ENCODE measurements at regions of chr5 and their contacts with region 1.

Region 1: DNA sequence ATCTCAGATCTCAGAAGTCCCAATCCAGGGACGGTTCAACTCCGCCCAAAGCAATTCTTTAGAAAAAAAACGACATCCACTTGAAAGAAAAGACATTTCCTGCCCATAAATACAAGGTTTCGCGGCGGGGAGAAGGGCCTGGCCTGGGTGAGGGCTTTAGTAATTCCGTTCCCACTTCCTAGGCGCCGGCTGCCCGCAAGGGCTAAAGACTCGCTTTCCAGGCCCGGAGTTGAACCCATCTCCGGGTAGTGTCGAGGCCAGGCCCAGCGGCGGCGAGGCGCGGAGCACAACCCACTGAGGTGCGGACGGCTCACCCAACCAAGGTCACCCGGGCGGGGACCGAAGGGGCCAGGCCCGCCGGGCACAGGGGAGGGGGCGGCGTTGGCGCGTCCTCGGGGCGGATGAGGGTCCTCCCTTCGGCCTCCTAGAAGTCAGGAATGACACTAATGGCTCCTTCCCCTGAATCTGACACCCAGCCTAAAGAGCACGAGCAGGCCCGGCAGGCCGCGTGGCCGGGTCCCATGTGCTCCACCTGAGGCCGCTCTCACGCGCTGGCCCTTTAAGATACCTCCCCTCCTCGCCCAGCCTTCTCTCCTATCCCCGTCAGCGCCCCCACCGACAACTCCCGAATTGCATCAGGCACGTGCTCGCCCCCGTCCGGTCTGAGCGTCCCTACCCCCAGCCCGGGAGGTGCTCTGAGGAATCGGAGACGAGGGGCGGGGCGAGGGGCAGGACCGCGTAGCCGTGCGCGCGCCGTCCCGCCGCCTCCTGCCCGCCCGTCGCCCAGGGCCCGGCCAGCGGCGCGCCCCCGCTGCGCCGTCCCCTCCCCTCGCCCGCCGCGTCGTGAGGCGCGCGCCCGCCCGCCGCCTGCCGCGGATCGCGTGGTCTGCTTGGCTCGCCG is 467 bp upstream of the LARP1 start:
- DNase-seq: peak; percentile 98
- ATAC-seq: peak; percentile 86
- H3K4me3 ChIP-seq: peak overlapping the region; percentile 98
- H3K27ac ChIP-seq: peak overlapping the region; percentile 97
- H3K4me1 ChIP-seq: peaks cover 16% of the 10 kb centered on the region
- H3K27me3 ChIP-seq: no peaks in the 10 kb centered on the region
- CTCF ChIP-seq: peak; percentile 58
- POLR2A ChIP-seq: peak; percentile 60
- RAD21 ChIP-seq: peak; percentile 34

Region 2: GRCh38 chr5:154647114-154647760 is 107.5 kb before region 1 on chr5:
- CTCF ChIA-PET with region 1: no interaction called
- POLR2A ChIA-PET with region 1: no interaction called
- dilution Hi-C with region 1: no loop called
- in situ Hi-C with region 1: no loop called
- intact Hi-C with region 1: loop called (anchors 1 kb)
- DNase-seq: peak; percentile 12
- ATAC-seq: peak; percentile 25; the same call in 1 of the 2 replicates
- H3K4me3 ChIP-seq: no peak overlapping the region
- H3K27ac ChIP-seq: no peak overlapping the region
- H3K4me1 ChIP-seq: no peaks in the 10 kb centered on the region
- H3K27me3 ChIP-seq: peaks cover 5% of the 10 kb centered on the region
- CTCF ChIP-seq: no peak
- POLR2A ChIP-seq: no peak
- RAD21 ChIP-seq: no peak

Region 3: GRCh38 chr5:154683101-154683880 is 71.4 kb before region 1 on chr5:
- CTCF ChIA-PET with region 1: no interaction called
- POLR2A ChIA-PET with region 1: interaction called, 6 read pairs
- dilution Hi-C with region 1: no loop called
- in situ Hi-C with region 1: no loop called
- intact Hi-C with region 1: loop called (anchors 1 kb)
- DNase-seq: no peak
- ATAC-seq: peak; percentile 9; the same call in 1 of the 2 replicates
- H3K4me3 ChIP-seq: peak overlapping the region; percentile 55
- H3K27ac ChIP-seq: no peak overlapping the region
- H3K4me1 ChIP-seq: no peaks in the 10 kb centered on the region
- H3K27me3 ChIP-seq: no peaks in the 10 kb centered on the region
- CTCF ChIP-seq: no peak
- POLR2A ChIP-seq: no peak
- RAD21 ChIP-seq: no peak

Region 4: GRCh38 chr5:154791535-154791934 is 36.8 kb after region 1 on chr5:
- CTCF ChIA-PET with region 1: no interaction called
- POLR2A ChIA-PET with region 1: no interaction called
- dilution Hi-C with region 1: no loop called
- in situ Hi-C with region 1: no loop called
- intact Hi-C with region 1: loop called (anchors 2 kb)
- DNase-seq: no peak
- ATAC-seq: no peak
- H3K4me3 ChIP-seq: no peak overlapping the region
- H3K27ac ChIP-seq: no peak overlapping the region
- H3K4me1 ChIP-seq: peaks cover 28% of the 10 kb centered on the region
- H3K27me3 ChIP-seq: no peaks in the 10 kb centered on the region
- CTCF ChIP-seq: no peak
- POLR2A ChIP-seq: no peak
- RAD21 ChIP-seq: no peak

Region 5: DNA sequence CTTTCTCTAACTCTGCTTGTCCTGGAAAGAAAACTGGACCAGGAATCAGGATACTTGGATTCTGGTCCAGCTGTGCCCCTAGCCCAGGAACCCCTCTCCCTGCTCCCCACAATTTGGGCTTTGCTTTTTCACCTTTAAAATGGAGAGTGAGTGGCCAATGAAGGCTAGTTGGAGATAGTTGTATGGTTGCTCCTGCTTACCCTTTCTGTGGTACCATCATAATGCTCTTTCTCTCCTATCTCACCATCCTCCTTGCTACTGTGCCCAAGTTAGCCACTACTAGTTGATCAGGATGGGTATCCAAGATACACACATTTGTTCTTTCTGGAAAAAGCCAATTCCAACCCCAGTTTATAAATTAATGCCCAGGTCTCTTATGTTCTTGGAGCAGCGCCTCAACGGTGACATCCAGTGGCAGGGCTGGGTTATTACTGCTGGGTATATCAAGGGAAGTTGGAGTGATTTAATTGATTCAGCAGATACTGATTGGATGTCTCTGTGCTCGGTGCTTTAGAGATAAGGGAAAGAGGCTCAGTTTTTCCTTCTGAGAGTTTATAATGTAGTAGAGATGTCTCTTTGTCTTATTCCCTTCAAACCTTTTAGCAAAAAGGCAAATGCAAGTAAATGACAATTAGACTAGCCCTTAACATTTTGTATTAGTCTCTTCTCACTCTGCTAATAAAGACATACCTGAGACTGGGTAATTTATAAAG is 57.1 kb after region 1 on chr5:
- CTCF ChIA-PET with region 1: no interaction called
- POLR2A ChIA-PET with region 1: no interaction called
- dilution Hi-C with region 1: no loop called
- in situ Hi-C with region 1: no loop called
- intact Hi-C with region 1: loop called (anchors 2 kb)
- DNase-seq: peak; percentile 76
- ATAC-seq: peak; percentile 93
- H3K4me3 ChIP-seq: no peak overlapping the region
- H3K27ac ChIP-seq: no peak overlapping the region
- H3K4me1 ChIP-seq: no peaks in the 10 kb centered on the region
- H3K27me3 ChIP-seq: no peaks in the 10 kb centered on the region
- CTCF ChIP-seq: peak; percentile 92
- POLR2A ChIP-seq: no peak
- RAD21 ChIP-seq: peak; percentile 90